Mammary epithelial cell (primary cell): ENCODE measurements at regions of chr11 and their contacts with region 1.

Region 1: DNA sequence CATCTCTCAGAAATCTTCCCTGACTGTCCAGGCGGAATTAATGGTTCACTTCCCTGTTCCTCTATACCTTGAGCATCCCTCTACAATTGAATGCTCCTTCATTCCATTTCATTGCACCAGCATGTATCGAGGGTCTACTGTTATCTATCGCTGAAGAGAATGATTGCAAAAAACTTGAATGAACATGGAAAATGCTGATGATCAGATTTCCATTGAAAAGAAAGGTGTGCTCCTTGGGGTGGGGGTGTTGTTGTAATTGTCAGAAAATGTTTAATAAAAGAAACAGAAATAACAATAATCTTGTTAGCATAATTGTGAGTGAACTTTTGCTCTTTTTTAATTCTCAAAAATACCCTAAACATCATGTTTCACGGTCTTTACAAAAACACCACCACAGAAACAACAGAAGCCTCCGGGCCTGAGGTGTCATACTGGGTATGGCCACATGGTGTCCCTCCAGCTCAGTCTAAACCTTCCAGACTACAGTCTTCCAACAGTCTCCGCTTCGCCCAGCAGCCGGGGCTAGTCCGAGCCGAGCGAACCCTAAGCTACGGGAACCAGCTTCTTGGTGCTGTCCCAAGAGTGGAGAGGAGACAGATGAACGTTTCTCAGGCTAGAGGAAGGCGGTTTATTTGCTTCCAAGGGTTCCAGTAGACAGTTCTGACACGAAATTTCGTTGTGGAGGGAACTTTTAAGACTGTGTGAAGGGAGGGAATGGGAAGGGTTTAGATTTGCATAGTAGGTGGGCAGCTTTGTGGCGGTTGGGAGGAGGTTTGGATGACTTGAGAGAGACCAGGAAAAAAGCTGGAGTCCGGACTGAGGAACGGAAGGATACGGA is 75.8 kb upstream of the ZBED5 start:
- DNase-seq: peak; percentile 88
- H3K4me3 ChIP-seq: peak overlapping the region; percentile 41 to 60 (median 50)
- H3K27ac ChIP-seq: peak overlapping the region; percentile 19
- H3K4me1 ChIP-seq: peaks cover 17% of the 10 kb centered on the region
- H3K27me3 ChIP-seq: no peaks in the 10 kb centered on the region
- CTCF ChIP-seq: peak; percentile 89 to 98

Region 2: DNA sequence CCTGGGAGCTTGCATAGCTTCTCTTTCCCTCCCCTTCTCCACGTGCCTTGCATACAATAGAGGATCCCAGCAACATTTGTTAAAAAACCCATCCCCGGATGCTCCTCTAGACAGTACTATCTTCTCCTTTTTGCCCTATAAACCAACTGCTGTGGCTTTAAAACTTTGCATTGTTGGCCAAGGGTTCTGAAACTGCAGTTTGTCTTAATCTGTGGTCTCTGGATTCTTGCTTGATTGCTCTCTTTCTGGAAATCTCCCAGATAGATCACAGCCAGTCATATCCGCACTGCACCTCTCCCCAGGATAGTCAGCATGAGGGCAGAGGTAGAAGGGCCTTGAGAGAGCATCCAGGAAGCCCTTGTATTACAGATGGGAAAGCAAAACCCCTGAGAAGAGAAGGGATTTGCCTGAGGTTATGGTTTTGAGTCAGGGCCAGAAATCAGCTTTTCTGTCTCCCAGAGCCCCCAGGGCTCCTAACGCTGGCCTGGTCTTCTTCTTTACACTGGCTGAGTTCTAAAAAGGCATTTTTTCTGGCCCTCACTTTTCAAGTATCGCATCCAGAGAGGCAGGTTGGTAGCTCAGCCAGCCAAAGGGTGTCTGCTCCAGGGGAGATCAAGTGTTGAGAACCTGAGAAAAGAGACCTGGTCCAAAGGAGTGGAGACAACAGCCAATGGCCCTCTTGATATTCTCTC is 558.2 kb before region 1 on chr11:
- CTCF ChIA-PET with region 1: no interaction called
- dilution Hi-C with region 1: no loop called
- in situ Hi-C with region 1: no loop called
- intact Hi-C with region 1: no loop called
- DNase-seq: peak; percentile 36
- H3K4me3 ChIP-seq: no peak overlapping the region
- H3K27ac ChIP-seq: no peak overlapping the region
- H3K4me1 ChIP-seq: no peaks in the 10 kb centered on the region
- H3K27me3 ChIP-seq: no peaks in the 10 kb centered on the region
- CTCF ChIP-seq: no peak

Region 3: GRCh38 chr11:10808553-10809372 is 124.9 kb before region 1 on chr11 and contains the start of gene EIF4G2:
- CTCF ChIA-PET with region 1: interaction called, 3 read pairs
- dilution Hi-C with region 1: no loop called
- in situ Hi-C with region 1: no loop called
- intact Hi-C with region 1: loop called (anchors 1 kb)
- DNase-seq: peak; percentile 99
- H3K4me3 ChIP-seq: peak within 1 kb of the TSS; percentile 64 to 89 (median 86)
- H3K27ac ChIP-seq: peak within 1 kb of the TSS; percentile 83
- H3K4me1 ChIP-seq: peaks cover 23% of the 10 kb centered on the region
- H3K27me3 ChIP-seq: no peaks in the 10 kb centered on the region
- CTCF ChIP-seq: no peak
- total RNA-seq, gene EIF4G2: 737 to 956 TPM

Region 4: DNA sequence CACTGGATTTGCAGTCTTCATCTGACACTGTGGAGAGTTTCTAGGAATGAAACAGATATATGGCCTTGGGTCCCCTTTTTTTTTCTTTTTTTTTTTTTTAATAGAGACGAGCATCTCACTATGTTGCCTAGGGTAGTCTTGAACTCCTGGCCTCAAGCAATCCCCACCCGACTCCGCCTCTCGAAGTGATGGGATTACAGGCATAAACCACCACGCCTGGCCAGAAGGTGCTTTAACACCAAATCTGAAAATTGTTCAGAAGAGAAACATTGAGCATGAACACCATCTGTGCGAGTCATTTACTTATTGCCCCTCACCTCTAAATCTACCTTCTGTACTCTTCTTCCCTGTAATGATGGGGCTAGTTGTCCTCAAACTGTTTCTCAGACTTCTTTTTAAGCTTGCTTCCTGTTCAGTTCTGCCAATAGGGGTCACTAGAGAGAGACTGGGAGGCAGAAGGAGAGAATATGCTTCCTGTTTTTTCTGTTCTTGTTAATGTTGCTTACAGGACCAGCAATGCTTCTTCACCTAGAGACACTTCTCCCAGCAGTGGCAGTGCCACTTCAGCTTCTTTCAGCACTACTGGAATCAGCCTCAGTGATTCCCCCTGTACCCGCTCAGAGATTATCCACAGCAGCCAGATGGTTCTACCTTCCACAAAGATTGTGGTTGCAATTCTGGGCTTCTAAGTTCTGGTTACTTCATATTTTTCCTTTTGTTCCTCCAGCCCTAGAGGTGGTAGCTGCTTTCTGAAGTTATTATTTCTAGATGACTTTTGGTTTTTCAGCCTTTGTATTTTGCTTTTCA is 55.1 kb before region 1 on chr11:
- CTCF ChIA-PET with region 1: interaction called, 6 read pairs
- dilution Hi-C with region 1: no loop called
- in situ Hi-C with region 1: no loop called
- intact Hi-C with region 1: loop called (anchors 1 kb)
- DNase-seq: peak; percentile 52
- H3K4me3 ChIP-seq: no peak overlapping the region
- H3K27ac ChIP-seq: no peak overlapping the region
- H3K4me1 ChIP-seq: peaks cover 4% of the 10 kb centered on the region
- H3K27me3 ChIP-seq: no peaks in the 10 kb centered on the region
- CTCF ChIP-seq: peak; percentile 81 to 84

Region 5: GRCh38 chr11:10973416-10973815 is 39.7 kb after region 1 on chr11:
- CTCF ChIA-PET with region 1: no interaction called
- dilution Hi-C with region 1: no loop called
- in situ Hi-C with region 1: no loop called
- intact Hi-C with region 1: no loop called
- DNase-seq: no peak
- H3K4me3 ChIP-seq: no peak overlapping the region
- H3K27ac ChIP-seq: no peak overlapping the region
- H3K4me1 ChIP-seq: no peaks in the 10 kb centered on the region
- H3K27me3 ChIP-seq: no peaks in the 10 kb centered on the region
- CTCF ChIP-seq: no peak

Region 6: GRCh38 chr11:11022125-11022730 is 88.6 kb after region 1 on chr11:
- CTCF ChIA-PET with region 1: interaction called, 10 read pairs
- dilution Hi-C with region 1: no loop called
- in situ Hi-C with region 1: loop called (anchors 5 kb)
- intact Hi-C with region 1: loop called (anchors 1 kb)
- DNase-seq: no peak
- H3K4me3 ChIP-seq: no peak overlapping the region
- H3K27ac ChIP-seq: no peak overlapping the region
- H3K4me1 ChIP-seq: peaks cover 12% of the 10 kb centered on the region
- H3K27me3 ChIP-seq: no peaks in the 10 kb centered on the region
- CTCF ChIP-seq: peak; percentile 39 to 46

Region 7: GRCh38 chr11:11265994-11266606 is 332.4 kb after region 1 on chr11:
- CTCF ChIA-PET with region 1: interaction called, 5 read pairs
- dilution Hi-C with region 1: no loop called
- in situ Hi-C with region 1: no loop called
- intact Hi-C with region 1: loop called (anchors 1 kb)
- DNase-seq: peak; percentile 56
- H3K4me3 ChIP-seq: no peak overlapping the region
- H3K27ac ChIP-seq: peak overlapping the region; percentile 5
- H3K4me1 ChIP-seq: peaks cover 20% of the 10 kb centered on the region
- H3K27me3 ChIP-seq: no peaks in the 10 kb centered on the region
- CTCF ChIP-seq: peak; percentile 96 to 97

Region 8: DNA sequence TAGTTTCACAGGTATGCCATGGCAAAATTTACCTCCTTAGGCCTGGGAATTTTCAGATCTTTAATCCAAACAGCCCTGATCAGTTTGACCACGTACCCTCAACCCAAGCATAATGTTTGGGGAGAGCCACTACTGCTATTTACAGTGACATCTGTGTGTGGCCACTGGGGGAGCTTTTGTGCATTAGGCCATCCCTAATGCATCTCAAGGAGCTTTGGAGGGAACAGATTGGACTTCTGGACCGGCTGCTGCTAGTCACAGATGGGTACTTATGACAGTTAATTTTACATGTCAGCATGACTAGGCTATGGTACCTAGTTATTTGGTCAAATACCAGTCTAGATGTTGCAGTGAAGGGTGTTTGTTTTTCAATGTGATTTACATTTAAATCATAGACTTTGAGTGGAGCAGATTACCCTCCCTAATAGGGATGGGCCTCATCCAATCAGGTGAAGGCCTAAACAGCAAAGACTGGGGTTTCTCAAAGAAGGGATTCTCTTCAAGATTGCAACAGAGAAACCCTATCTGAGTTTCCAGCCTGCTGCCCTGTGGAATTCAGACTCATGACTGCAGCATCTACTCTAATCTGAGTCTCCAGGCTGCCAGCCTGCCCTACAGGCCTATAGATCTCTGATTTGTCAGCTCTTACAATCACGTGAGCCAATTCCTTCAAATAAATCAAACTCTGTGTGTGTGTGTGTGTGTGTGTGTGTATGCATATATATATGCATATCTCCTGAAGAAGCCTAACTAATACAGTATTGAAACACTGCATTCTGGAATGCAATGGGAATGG is 726.1 kb after region 1 on chr11:
- CTCF ChIA-PET with region 1: no interaction called
- dilution Hi-C with region 1: no loop called
- in situ Hi-C with region 1: no loop called
- intact Hi-C with region 1: loop called (anchors 10 kb)
- DNase-seq: no peak
- H3K4me3 ChIP-seq: no peak overlapping the region
- H3K27ac ChIP-seq: no peak overlapping the region
- H3K4me1 ChIP-seq: no peaks in the 10 kb centered on the region
- H3K27me3 ChIP-seq: peaks cover 5% of the 10 kb centered on the region
- CTCF ChIP-seq: peak; percentile 14 to 36